ENCODE measurements at regions of chr12 and their contacts with region 1.

Region 1: DNA sequence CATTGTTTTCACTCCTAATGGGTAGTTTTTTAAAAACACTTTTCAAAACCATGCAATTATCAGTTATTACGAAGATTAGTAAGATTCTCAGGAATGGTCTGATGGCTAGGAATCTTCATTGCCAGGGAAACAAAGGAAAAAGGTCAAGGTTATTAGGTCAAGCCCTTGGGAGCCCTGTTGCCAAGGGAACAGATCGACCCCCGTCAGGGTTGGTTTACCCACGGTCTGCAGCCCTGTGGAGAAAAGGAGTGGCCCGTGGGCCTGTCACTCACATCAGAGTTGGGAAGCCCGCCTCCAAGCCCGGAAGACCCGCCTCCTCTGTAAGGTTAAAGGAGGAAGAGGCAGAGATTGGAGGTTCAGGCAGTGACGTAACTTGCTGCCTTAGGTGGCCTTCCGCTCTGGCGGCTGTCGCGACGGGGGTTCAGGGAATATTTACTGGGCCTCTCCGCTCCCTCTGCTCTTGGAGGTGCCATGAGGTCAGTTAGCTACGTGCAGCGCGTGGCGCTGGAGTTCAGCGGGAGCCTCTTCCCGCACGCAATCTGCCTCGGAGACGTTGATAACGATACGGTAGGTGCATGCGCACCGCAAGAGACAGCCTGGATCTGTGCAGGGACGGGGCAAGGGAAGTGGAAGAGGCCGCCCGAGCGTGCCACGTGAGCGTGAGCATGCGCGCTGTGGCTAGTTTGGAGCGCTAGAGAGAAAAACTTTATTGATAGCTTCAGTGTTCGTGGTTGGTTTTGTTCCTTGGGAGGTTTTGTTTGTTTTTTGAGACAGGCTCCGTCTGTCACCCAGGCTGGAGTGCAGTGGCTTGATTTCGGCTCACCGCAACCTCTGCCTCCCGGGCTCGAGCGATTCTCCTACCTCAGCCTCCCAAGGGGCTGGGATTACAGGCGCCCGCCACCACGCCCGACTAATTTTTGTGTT is at the start of gene ITFG2:
- DNase-seq: peak; percentile 97
- ATAC-seq: peak; percentile 96
- H3K4me3 ChIP-seq: peak within 1 kb of the TSS; percentile 77 to 89
- H3K27ac ChIP-seq: peak within 1 kb of the TSS; percentile 74
- H3K4me1 ChIP-seq: peaks cover 5 to 18% of the 10 kb centered on the region in 2 experiments
- H3K27me3 ChIP-seq: no peaks in the 10 kb centered on the region
- CTCF ChIP-seq: no peak
- POLR2A ChIP-seq: peak; percentile 96
- RAD21 ChIP-seq: no peak
- total RNA-seq, gene ITFG2: 24.6 TPM

Region 2: DNA sequence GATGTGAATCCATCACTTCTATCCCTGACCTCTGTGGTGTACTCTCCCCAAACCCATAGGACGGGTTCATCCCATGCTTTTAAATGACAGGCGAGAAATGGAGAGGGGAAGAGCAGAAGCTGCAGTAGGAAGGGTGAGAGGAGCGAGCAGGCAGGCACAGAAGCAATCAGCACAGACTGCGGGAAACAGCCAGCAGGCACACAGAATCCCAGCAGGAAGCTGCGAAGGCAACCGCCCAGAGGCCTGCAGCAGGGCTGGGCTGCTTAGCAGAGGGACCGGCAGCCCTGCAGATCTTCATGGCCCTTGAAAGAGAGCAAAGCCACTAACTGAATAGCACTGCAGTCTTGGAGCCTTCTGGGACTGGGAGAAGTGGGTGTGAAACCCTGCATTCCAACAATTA is 304.7 kb before region 1 on chr12:
- CTCF ChIA-PET with region 1: no interaction called
- POLR2A ChIA-PET with region 1: no interaction called
- RAD21 ChIA-PET with region 1: no interaction called
- intact Hi-C with region 1: no loop called
- DNase-seq: no peak
- ATAC-seq: no peak
- H3K4me3 ChIP-seq: no peak overlapping the region
- H3K27ac ChIP-seq: no peak overlapping the region
- H3K4me1 ChIP-seq: no peaks in the 10 kb centered on the region
- H3K27me3 ChIP-seq: peaks cover 18% of the 10 kb centered on the region; the same call in 1 of the 2 replicates
- CTCF ChIP-seq: no peak
- POLR2A ChIP-seq: no peak
- RAD21 ChIP-seq: no peak

Region 3: DNA sequence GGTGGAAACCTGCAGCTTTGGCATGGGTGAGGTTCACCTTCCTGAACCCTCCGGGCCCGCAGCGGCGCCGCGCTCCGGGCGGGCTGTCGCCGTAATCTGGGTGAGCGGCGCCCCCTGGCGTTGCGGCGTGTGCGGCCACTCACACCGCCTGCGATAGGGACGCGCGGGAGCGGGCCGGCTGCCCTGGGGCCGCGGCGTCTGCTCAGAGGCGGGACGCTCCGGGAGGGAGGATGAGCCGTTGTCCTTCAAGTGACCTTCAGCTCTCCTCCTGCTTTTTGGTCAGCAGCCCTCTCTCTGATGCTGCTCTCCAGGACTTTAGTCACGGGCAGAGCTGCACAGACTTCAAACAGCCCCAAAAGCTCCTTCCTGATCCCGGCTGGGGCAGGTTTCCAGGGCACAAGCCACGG is 229.5 kb before region 1 on chr12:
- CTCF ChIA-PET with region 1: no interaction called
- POLR2A ChIA-PET with region 1: no interaction called
- RAD21 ChIA-PET with region 1: no interaction called
- intact Hi-C with region 1: no loop called
- DNase-seq: peak; percentile 10
- ATAC-seq: peak; percentile 99
- H3K4me3 ChIP-seq: no peak overlapping the region; a peak in 1 of 4 replicates
- H3K27ac ChIP-seq: no peak overlapping the region
- H3K4me1 ChIP-seq: peaks cover 3 to 8% of the 10 kb centered on the region in 2 experiments; a peak in 3 of 4 replicates
- H3K27me3 ChIP-seq: peaks cover 28% of the 10 kb centered on the region
- CTCF ChIP-seq: peak; percentile 66 to 83 (median 81)
- POLR2A ChIP-seq: no peak
- RAD21 ChIP-seq: peak; percentile 92

Region 4: GRCh38 chr12:2739817-2740641 is 72.5 kb before region 1 on chr12:
- CTCF ChIA-PET with region 1: interaction called, 3 read pairs
- POLR2A ChIA-PET with region 1: no interaction called
- RAD21 ChIA-PET with region 1: no interaction called
- intact Hi-C with region 1: loop called (anchors 1 kb)
- DNase-seq: no peak
- ATAC-seq: peak; percentile 68
- H3K4me3 ChIP-seq: no peak overlapping the region
- H3K27ac ChIP-seq: no peak overlapping the region
- H3K4me1 ChIP-seq: no peaks in the 10 kb centered on the region
- H3K27me3 ChIP-seq: peaks cover 66% of the 10 kb centered on the region
- CTCF ChIP-seq: peak; percentile 57 to 72 (median 66); a peak in 5 of 6 replicates
- POLR2A ChIP-seq: no peak
- RAD21 ChIP-seq: peak; percentile 73